ENCODE measurements at regions of chr21 and their contacts with region 1.

Region 1: GRCh38 chr21:27700974-27701614 is 734.2 kb upstream of the ADAMTS5 start:
- DNase-seq: peak; percentile 23
- CTCF ChIP-seq: peak; percentile 64

Region 2: GRCh38 chr21:26842976-26843932 is 857.8 kb before region 1 on chr21:
- in situ Hi-C with region 1: loop called (anchors 25 kb)
- DNase-seq: no peak
- CTCF ChIP-seq: no peak

Measured in GM13976 (cell line).